Activated CD4-positive, alpha-beta T cell treated with anti-CD3 and anti-CD28 coated beads, Interleukin-2, amount 10 ng/mL, durations not matched to agents 24 days and 14 days (primary cell): ENCODE measurements at regions of chr12 and their contacts with region 1.

Region 1: GRCh38 chr12:68866950-68867349 is 59.0 kb downstream of the MDM2 start:
- DNase-seq: no peak
- H3K4me3 Mint-ChIP-seq: no peak overlapping the region
- H3K27ac Mint-ChIP-seq: no peak overlapping the region
- H3K4me1 Mint-ChIP-seq: peaks cover 19% of the 10 kb centered on the region
- H3K27me3 Mint-ChIP-seq: no peaks in the 10 kb centered on the region

Region 2: GRCh38 chr12:67852701-67853100 is 1014.2 kb before region 1 on chr12:
- intact Hi-C with region 1: no loop called
- DNase-seq: no peak
- H3K4me3 Mint-ChIP-seq: no peak overlapping the region
- H3K27ac Mint-ChIP-seq: no peak overlapping the region
- H3K4me1 Mint-ChIP-seq: no peaks in the 10 kb centered on the region
- H3K27me3 Mint-ChIP-seq: peaks cover 6% of the 10 kb centered on the region

Region 3: GRCh38 chr12:69254046-69254445 is 387.1 kb after region 1 on chr12:
- intact Hi-C with region 1: loop called (anchors 10 kb)
- DNase-seq: peak; percentile 77
- H3K4me3 Mint-ChIP-seq: no peak overlapping the region
- H3K27ac Mint-ChIP-seq: peak overlapping the region; percentile 43
- H3K4me1 Mint-ChIP-seq: peaks cover 27% of the 10 kb centered on the region
- H3K27me3 Mint-ChIP-seq: no peaks in the 10 kb centered on the region